Breast epithelium (tissue), 4 donors: ENCODE measurements at regions of chr1 and their contacts with region 1.

Region 1: DNA sequence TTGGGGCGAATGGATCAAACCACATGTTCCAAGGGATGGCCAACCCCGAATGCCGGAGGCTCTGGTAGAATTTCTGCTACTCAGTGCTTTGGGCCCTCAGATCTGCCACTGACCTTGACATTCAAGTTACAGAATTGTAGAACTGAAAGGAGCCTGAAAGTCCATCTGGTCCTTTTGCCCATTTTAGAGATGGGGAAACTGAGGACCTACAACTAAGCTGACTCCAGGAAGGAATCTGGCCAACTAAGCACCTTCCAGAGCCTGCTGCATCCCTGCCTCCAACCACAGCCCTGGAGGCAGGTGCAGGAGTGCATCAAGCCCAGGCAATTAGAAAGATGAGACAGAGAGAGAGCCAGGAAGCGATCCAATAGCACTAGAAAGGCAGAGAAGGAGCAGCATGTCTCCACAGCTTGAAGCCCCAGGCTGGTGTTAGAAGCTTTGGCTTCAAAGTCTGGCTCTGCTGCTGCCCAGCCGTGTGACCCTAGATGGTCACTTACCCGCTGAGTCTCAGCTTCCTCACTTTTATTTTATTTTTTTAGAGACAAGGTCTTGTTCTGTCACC is 1.3 kb upstream of the CTRC start:
- DNase-seq: no peak
- H3K4me3 ChIP-seq: no peak overlapping the region
- H3K27ac ChIP-seq: no peak overlapping the region
- H3K4me1 ChIP-seq: no peaks in the 10 kb centered on the region
- H3K27me3 ChIP-seq: no peaks in the 10 kb centered on the region
- CTCF ChIP-seq: no peak
- POLR2A ChIP-seq: no peak

Region 2: DNA sequence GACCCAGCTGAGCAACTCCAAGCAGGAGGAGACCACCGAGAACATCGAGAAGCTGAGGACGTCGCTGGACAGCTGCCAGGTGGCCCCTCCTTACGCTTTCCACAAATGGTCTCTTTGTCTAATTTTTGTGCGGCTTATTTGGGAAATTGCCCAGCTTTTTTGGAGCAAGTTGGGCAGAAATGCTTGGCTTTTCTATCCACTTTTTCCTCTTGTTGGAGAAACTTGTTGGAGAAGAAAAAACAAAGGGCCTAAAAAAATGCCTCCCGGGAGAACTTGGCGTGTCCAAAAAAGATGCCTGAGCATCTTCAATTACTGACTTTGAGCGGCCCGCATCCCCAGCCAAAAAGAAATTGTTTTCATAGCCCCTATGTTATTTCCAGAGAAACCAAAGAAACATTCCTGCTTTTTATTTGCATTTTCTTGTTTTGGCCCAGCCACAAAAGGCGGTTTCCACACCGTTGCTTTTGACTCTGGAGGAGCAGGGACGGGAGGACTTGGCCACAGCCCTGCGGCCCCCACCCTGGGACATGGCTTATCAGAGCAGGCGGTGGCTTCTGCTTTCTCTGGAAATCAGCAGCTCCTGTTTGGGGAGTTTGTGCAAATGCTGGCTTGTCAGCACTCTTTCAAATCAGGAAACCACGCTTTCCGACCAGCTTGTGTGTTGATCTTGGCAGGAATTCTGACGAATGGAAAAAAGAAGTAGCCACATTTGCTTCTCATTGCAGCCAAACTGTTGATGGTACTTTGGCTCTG is 108.4 kb before region 1 on chr1:
- intact Hi-C with region 1: loop called (anchors 5 kb)
- DNase-seq: peak in 1 of 2 donors; percentile 26
- H3K4me3 ChIP-seq: no peak overlapping the region
- H3K27ac ChIP-seq: no peak overlapping the region
- H3K4me1 ChIP-seq: no peaks in the 10 kb centered on the region
- H3K27me3 ChIP-seq: no peaks in the 10 kb centered on the region
- CTCF ChIP-seq: no peak
- POLR2A ChIP-seq: no peak

Region 3: GRCh38 chr1:15406609-15407559 is 30.1 kb before region 1 on chr1:
- intact Hi-C with region 1: no loop called
- DNase-seq: no peak
- H3K4me3 ChIP-seq: no peak overlapping the region
- H3K27ac ChIP-seq: peak overlapping the region; percentile 38 to 45
- H3K4me1 ChIP-seq: peaks cover 0 to 4% of the 10 kb centered on the region in 2 donors
- H3K27me3 ChIP-seq: no peaks in the 10 kb centered on the region
- CTCF ChIP-seq: no peak
- POLR2A ChIP-seq: no peak

Region 4: DNA sequence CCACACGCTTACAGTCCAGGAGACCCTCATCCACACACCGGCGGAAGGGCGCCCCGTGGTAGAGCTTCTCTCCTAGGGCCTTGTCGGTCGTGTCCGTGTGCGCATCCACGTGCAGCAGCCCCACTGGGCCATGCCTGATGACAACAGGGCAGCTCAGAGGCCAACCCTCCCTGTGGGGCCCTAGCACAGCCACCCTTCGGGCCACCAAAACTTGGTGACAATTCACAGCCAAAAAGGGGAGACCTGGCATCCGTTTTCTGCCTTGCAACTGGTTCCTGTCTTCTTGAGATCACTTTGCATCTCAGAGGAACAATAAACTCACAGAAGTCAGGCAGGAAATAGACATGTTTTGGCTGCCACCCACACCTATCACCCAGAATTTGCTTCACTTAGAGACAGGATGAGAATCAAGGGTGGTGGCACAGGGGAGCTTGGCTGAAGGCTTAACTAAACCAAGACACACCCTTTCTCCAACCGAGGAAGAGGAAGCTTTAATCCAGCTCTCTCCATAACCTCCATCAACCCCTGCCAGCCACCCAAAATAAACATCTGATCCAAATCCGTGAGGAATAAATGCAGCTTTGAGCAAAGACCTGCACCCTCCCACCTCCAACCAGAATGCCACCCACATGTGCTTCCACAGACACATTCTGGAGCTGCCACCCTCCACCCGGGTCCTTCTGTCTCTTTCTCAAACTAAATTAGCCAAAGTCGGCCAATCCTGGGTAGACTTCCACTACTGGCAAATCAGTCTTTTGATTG is 142.1 kb after region 1 on chr1:
- intact Hi-C with region 1: no loop called
- DNase-seq: no peak
- H3K4me3 ChIP-seq: no peak overlapping the region
- H3K27ac ChIP-seq: no peak overlapping the region
- H3K4me1 ChIP-seq: no peaks in the 10 kb centered on the region
- H3K27me3 ChIP-seq: no peaks in the 10 kb centered on the region
- CTCF ChIP-seq: no peak
- POLR2A ChIP-seq: no peak